ENCODE measurements at regions of chrX and their contacts with region 1.

Region 1: GRCh38 chrX:36856849-36857248 is 151.3 kb upstream of the FAM47C start:
- DNase-seq: peak; percentile 17
- H3K4me3 Mint-ChIP-seq: no peak overlapping the region
- H3K27ac Mint-ChIP-seq: no peak overlapping the region
- H3K4me1 Mint-ChIP-seq: no peaks in the 10 kb centered on the region
- H3K27me3 Mint-ChIP-seq: peaks cover 60% of the 10 kb centered on the region
- CTCF ChIP-seq: peak; percentile 26

Region 2: GRCh38 chrX:35890699-35891098 is 966.1 kb before region 1 on chrX:
- CTCF ChIA-PET with region 1: interaction called, 3 read pairs
- POLR2A ChIA-PET with region 1: no interaction called
- intact Hi-C with region 1: loop called (anchors 2 kb)
- DNase-seq: peak; percentile 79
- H3K4me3 Mint-ChIP-seq: no peak overlapping the region
- H3K27ac Mint-ChIP-seq: no peak overlapping the region
- H3K4me1 Mint-ChIP-seq: no peaks in the 10 kb centered on the region
- H3K27me3 Mint-ChIP-seq: no peaks in the 10 kb centered on the region
- CTCF ChIP-seq: peak; percentile 56

Region 3: DNA sequence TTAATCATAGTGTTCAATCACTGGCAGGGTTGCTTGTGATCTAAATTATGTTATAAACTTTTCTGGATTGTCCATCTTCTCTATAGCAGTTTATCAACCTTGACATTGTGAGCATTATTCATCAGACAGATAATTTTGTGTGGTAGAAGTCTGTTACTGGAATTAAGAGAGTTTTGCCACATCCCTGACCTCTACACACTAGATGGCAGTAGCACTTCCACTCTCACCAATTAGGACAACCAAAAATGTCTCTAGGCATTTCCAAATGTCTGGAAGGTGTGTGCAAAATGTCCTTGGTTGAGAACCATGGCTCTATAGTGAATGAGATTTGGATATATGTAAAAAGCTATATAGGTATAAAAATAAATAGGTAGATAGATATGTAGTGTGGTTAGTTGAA is 172.8 kb before region 1 on chrX:
- CTCF ChIA-PET with region 1: no interaction called
- POLR2A ChIA-PET with region 1: no interaction called
- intact Hi-C with region 1: loop called (anchors 2 kb)
- DNase-seq: peak; percentile 30
- H3K4me3 Mint-ChIP-seq: no peak overlapping the region
- H3K27ac Mint-ChIP-seq: no peak overlapping the region
- H3K4me1 Mint-ChIP-seq: no peaks in the 10 kb centered on the region
- H3K27me3 Mint-ChIP-seq: peaks cover 46% of the 10 kb centered on the region
- CTCF ChIP-seq: no peak